B cell (primary cell): ENCODE measurements at regions of chr6 and their contacts with region 1.

Region 1: DNA sequence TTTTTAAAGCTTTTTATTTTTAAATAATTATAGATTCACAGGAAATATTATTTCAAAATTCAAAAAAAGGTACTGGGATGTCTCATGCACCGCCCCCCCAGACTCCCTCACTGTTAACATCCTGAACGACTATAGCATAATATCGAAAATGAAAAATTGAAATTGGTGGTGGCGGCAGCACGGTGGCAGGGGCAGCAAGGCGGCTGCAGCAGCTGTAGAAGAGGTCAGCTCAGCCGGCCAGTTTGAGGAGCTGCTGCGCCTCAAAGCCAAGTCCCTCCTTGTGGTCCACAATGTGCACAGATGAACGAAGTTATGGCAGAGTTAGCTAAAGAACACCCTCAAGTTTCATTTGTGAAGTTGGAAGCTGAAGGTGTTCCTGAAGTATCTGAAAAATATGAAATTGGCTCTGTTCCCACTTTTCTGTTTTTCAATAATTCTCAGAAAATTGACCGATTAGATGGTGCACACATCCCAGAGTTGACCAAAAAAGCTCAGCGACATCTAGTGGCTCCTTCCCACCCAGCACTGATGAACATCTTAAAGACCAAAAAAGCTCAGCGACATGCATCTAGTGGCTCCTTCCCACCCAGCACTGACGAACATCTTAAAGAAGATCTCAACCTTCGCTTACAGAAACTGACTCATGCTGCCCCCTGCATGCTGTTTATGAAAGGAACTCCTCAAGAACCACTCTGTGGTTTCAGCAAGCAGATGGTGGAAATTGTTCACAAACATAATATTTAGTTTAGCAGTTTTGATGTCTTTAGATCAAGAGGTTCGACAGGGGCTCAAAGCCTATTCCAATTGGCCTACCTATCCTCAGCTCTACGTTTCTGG is 100.8 kb downstream of the FAM217A start:
- DNase-seq: peak; percentile 65
- ATAC-seq: peak; percentile 95
- H3K4me3 ChIP-seq: no peak overlapping the region
- H3K4me3 Mint-ChIP-seq: no peak overlapping the region
- H3K27ac ChIP-seq: no peak overlapping the region
- H3K27ac Mint-ChIP-seq: no peak overlapping the region
- H3K4me1 ChIP-seq: peaks cover 0 to 7% of the 10 kb centered on the region in 2 donors
- H3K4me1 Mint-ChIP-seq: peaks cover 4% of the 10 kb centered on the region
- H3K27me3 ChIP-seq: peaks cover 0 to 3% (median 0%) of the 10 kb centered on the region in 4 experiments
- H3K27me3 Mint-ChIP-seq: peaks cover 8% of the 10 kb centered on the region
- CTCF ChIP-seq: peak; percentile 70

Region 2: GRCh38 chr6:3732345-3733141 is 245.6 kb before region 1 on chr6:
- CTCF ChIA-PET with region 1: interaction called, 13 read pairs
- POLR2A ChIA-PET with region 1: no interaction called
- intact Hi-C with region 1: no loop called
- DNase-seq: peak; percentile 72
- ATAC-seq: peak; percentile 67
- H3K4me3 ChIP-seq: no peak overlapping the region
- H3K4me3 Mint-ChIP-seq: no peak overlapping the region
- H3K27ac ChIP-seq: no peak overlapping the region
- H3K27ac Mint-ChIP-seq: no peak overlapping the region
- H3K4me1 ChIP-seq: no peaks in the 10 kb centered on the region
- H3K4me1 Mint-ChIP-seq: peaks cover 2% of the 10 kb centered on the region
- H3K27me3 ChIP-seq: no peaks in the 10 kb centered on the region
- H3K27me3 Mint-ChIP-seq: no peaks in the 10 kb centered on the region
- CTCF ChIP-seq: peak; percentile 82

Region 3: DNA sequence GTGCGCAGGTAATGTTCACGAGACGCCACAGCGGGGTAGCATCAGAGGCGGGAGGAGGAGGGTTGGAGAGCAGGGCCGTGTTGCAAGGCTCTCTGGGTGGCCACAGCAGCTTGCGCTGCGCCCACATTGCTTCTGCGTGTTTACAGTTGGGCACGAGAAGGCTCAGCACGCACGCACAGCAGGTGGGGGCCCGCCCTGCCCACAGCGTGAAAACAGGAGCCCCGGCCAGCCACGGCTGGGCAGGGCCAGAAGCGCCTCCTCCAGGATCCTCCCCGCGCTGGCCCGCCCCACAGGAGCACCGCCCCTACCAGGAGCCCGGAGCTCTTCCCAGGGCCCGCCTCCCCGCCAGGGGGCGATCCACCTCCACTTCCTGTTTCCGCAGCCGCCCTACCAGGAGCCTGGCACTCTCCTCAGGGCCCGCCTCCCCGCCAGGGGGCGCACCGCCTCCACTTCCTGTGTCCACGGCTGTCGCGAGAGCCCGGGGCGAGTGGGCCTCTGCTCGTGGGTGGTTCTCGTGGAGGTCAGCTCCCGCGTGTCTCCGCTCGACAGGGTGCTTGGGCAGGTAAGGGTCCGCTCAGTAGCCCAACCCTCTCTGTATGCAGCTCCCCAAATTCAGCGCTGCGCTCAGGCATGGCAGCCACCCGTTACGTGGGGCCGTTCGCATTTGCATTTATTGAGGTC is 129.0 kb before region 1 on chr6 and contains the start of gene FAM50B:
- CTCF ChIA-PET with region 1: interaction called, 16 read pairs
- POLR2A ChIA-PET with region 1: no interaction called
- intact Hi-C with region 1: loop called (anchors 5 kb)
- DNase-seq: peak; percentile 92
- ATAC-seq: peak; percentile 94
- H3K4me3 ChIP-seq: peak within 1 kb of the TSS; percentile 11 to 66 (median 65)
- H3K4me3 Mint-ChIP-seq: peak within 1 kb of the TSS; percentile 90
- H3K27ac ChIP-seq: peak within 1 kb of the TSS; percentile 54 to 65
- H3K27ac Mint-ChIP-seq: peak within 1 kb of the TSS; percentile 94
- H3K4me1 ChIP-seq: peaks cover 6 to 21% of the 10 kb centered on the region in 2 donors
- H3K4me1 Mint-ChIP-seq: peaks cover 21% of the 10 kb centered on the region
- H3K27me3 ChIP-seq: no peaks in the 10 kb centered on the region
- H3K27me3 Mint-ChIP-seq: no peaks in the 10 kb centered on the region
- CTCF ChIP-seq: peak; percentile 84
- total RNA-seq, gene FAM50B: 8.3 and 9.8 TPM in 2 replicates

Region 4: GRCh38 chr6:3962957-3963303 is 15.2 kb before region 1 on chr6:
- CTCF ChIA-PET with region 1: interaction called, 11 read pairs
- POLR2A ChIA-PET with region 1: no interaction called
- intact Hi-C with region 1: no loop called
- DNase-seq: no peak
- ATAC-seq: no peak
- H3K4me3 ChIP-seq: no peak overlapping the region
- H3K4me3 Mint-ChIP-seq: no peak overlapping the region
- H3K27ac ChIP-seq: no peak overlapping the region
- H3K27ac Mint-ChIP-seq: no peak overlapping the region
- H3K4me1 ChIP-seq: no peaks in the 10 kb centered on the region
- H3K4me1 Mint-ChIP-seq: no peaks in the 10 kb centered on the region
- H3K27me3 ChIP-seq: no peaks in the 10 kb centered on the region
- H3K27me3 Mint-ChIP-seq: no peaks in the 10 kb centered on the region
- CTCF ChIP-seq: no peak

Region 5: DNA sequence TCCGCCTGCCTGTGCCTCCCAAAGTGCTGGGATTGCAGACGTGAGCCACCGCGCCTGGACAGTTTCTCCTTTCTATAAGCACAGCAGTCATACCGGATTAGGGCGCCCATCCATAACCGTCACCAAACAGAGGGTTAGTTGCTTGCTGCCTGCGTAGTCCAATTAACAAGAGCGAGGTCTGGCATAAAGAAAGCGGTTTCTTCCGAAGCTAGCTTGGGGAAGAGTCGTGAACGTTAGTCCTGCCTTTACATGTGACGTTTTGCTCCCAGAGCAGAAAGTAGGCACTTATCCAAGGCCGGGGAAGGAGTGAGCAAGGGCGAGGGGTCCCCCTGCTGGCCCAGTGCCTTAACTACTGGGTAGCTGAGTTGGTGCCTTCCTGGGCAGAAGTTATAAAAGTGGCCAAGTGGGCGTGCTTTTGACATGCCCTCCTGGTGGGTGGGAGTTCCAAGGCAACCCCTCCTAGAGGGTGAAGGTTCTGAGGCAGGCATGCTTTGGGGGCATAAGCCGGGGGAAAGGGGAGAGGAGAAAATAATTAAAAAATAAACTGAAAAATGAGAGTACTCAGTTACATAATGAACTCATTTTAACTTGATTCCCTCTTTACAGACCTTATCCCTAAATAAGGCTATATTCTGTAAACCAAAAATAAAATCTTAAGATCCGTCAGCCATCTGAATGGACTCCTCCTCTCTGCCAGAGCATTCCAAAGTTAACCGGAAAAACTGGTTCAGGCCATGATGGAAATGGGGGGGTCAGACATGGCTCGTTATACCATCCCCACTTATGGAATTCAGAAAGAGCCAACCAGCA is 12.8 kb after region 1 on chr6:
- CTCF ChIA-PET with region 1: interaction called, 43 read pairs
- POLR2A ChIA-PET with region 1: no interaction called
- intact Hi-C with region 1: no loop called
- DNase-seq: peak; percentile 72
- ATAC-seq: peak; percentile 85
- H3K4me3 ChIP-seq: no peak overlapping the region
- H3K4me3 Mint-ChIP-seq: no peak overlapping the region
- H3K27ac ChIP-seq: no peak overlapping the region
- H3K27ac Mint-ChIP-seq: no peak overlapping the region
- H3K4me1 ChIP-seq: peaks cover 0 to 5% of the 10 kb centered on the region in 2 donors
- H3K4me1 Mint-ChIP-seq: peaks cover 5% of the 10 kb centered on the region
- H3K27me3 ChIP-seq: no peaks in the 10 kb centered on the region
- H3K27me3 Mint-ChIP-seq: no peaks in the 10 kb centered on the region
- CTCF ChIP-seq: peak; percentile 81